Dendritic cell treated with granulocyte-macrophage colony-stimulating factor and Interleukin-4, amounts not matched to agents 40 ng/mL and 50 ng/mL, for 4 days (primary cell): ENCODE measurements at regions of chr6 and their contacts with region 1.

Region 1: GRCh38 chr6:16684896-16685554 is 76.2 kb downstream of the ATXN1 start:
- H3K4me3 Mint-ChIP-seq: no peak overlapping the region
- H3K27ac Mint-ChIP-seq: peak overlapping the region; percentile 72
- H3K4me1 Mint-ChIP-seq: peaks cover 68% of the 10 kb centered on the region
- H3K27me3 Mint-ChIP-seq: no peaks in the 10 kb centered on the region

Region 2: GRCh38 chr6:16712931-16713484 is 28.0 kb after region 1 on chr6:
- intact Hi-C with region 1: loop called (anchors 2 kb)
- H3K4me3 Mint-ChIP-seq: peak overlapping the region; percentile 74
- H3K27ac Mint-ChIP-seq: peak overlapping the region; percentile 95
- H3K4me1 Mint-ChIP-seq: peaks cover 72% of the 10 kb centered on the region
- H3K27me3 Mint-ChIP-seq: no peaks in the 10 kb centered on the region

Region 3: DNA sequence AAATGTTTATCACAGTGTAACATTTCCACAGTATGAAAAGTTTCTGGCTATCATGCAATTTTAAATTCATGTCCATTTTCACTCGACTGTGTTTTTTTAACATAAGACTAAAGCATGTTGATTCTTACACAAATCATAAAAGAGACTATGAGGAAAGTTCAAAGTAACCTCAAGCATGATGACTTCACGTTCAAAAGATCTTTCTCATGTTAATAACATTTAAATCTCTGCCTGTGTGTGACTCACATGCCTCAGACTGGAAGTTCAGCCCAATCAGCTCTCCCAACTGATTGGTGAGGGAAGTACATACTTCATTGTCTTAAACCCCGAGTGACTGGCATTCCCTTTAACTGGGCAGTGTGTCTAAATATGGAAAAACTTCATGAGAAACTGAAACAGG is 38.8 kb after region 1 on chr6:
- intact Hi-C with region 1: loop called (anchors 5 kb)
- H3K4me3 Mint-ChIP-seq: peak overlapping the region; percentile 37
- H3K27ac Mint-ChIP-seq: peak overlapping the region; percentile 81
- H3K4me1 Mint-ChIP-seq: peaks cover 71% of the 10 kb centered on the region
- H3K27me3 Mint-ChIP-seq: no peaks in the 10 kb centered on the region